Heart right ventricle (tissue), 16 donors: ENCODE measurements at regions of chr17 and their contacts with region 1.

Region 1: GRCh38 chr17:15502369-15503112 is 35.1 kb upstream of the CDRT4 start:
- DNase-seq: peak; percentile 92 to 93
- ATAC-seq: peak; percentile 88 to 96 (median 94)
- H3K4me3 ChIP-seq: peak overlapping the region in 9 of 10 donors; percentile 8 to 47 (median 40)
- H3K27ac ChIP-seq: peak overlapping the region; percentile 36 to 88 (median 80)
- H3K4me1 ChIP-seq: peaks cover 3 to 23% (median 14%) of the 10 kb centered on the region in 9 donors
- H3K27me3 ChIP-seq: no peaks in the 10 kb centered on the region
- CTCF ChIP-seq: peak; percentile 84 to 97 (median 91)

Region 2: GRCh38 chr17:15341385-15341849 is 161.1 kb before region 1 on chr17 and contains the start of gene TEKT3:
- intact Hi-C with region 1: loop called in 1 of 10 experiments (anchors 10 kb)
- DNase-seq: peak; percentile 84 to 88
- ATAC-seq: peak; percentile 100
- H3K4me3 ChIP-seq: peak within 1 kb of the TSS; percentile 29 to 68 (median 58)
- H3K27ac ChIP-seq: no peak within 1 kb of the TSS
- H3K4me1 ChIP-seq: peaks cover 0 to 13% (median 10%) of the 10 kb centered on the region in 9 donors
- H3K27me3 ChIP-seq: peaks cover 0 to 58% (median 11%) of the 10 kb centered on the region in 7 donors
- CTCF ChIP-seq: no peak
- total RNA-seq, gene TEKT3: 0.26 to 1.1 (median 0.68) TPM in 7 of 10 donors, not detected in the others

Region 3: GRCh38 chr17:15384142-15384787 is 118.3 kb before region 1 on chr17:
- intact Hi-C with region 1: no loop called
- DNase-seq: peak; percentile 42 to 64
- ATAC-seq: peak; percentile 65 to 94 (median 82)
- H3K4me3 ChIP-seq: peak overlapping the region in 6 of 10 donors; percentile 30 to 37 (median 36)
- H3K27ac ChIP-seq: peak overlapping the region in 8 of 10 donors; percentile 19 to 72 (median 58)
- H3K4me1 ChIP-seq: peaks cover 0 to 26% (median 7%) of the 10 kb centered on the region in 9 donors
- H3K27me3 ChIP-seq: no peaks in the 10 kb centered on the region
- CTCF ChIP-seq: no peak

Region 4: GRCh38 chr17:15398736-15399331 is 103.7 kb before region 1 on chr17:
- intact Hi-C with region 1: no loop called
- DNase-seq: no peak
- ATAC-seq: peak; percentile 43 to 83 (median 62)
- H3K4me3 ChIP-seq: no peak overlapping the region
- H3K27ac ChIP-seq: peak overlapping the region in 5 of 10 donors; percentile 7 to 56 (median 19)
- H3K4me1 ChIP-seq: peaks cover 7 to 29% (median 22%) of the 10 kb centered on the region in 9 donors
- H3K27me3 ChIP-seq: no peaks in the 10 kb centered on the region
- CTCF ChIP-seq: no peak

Region 5: GRCh38 chr17:15436473-15437302 is 65.9 kb before region 1 on chr17:
- intact Hi-C with region 1: loop called in 2 of 10 experiments (anchors 5 kb)
- DNase-seq: peak; percentile 64 to 75
- ATAC-seq: peak; percentile 37 to 75 (median 64)
- H3K4me3 ChIP-seq: no peak overlapping the region
- H3K27ac ChIP-seq: peak overlapping the region; percentile 51 to 88 (median 76)
- H3K4me1 ChIP-seq: peaks cover 13 to 51% (median 41%) of the 10 kb centered on the region in 9 donors
- H3K27me3 ChIP-seq: no peaks in the 10 kb centered on the region
- CTCF ChIP-seq: peak in 8 of 9 donors; percentile 9 to 58 (median 44)